ENCODE measurements at regions of chr16 and their contacts with region 1.

Region 1: GRCh38 chr16:85554112-85554813 is 58.9 kb upstream of the GSE1 start:
- DNase-seq: peak; percentile 56
- ATAC-seq: peak; percentile 26
- H3K4me3 ChIP-seq: peak overlapping the region; percentile 75 to 82 (median 81)
- H3K27ac ChIP-seq: peak overlapping the region; percentile 80
- H3K4me1 ChIP-seq: peaks cover 60% of the 10 kb centered on the region
- H3K27me3 ChIP-seq: no peaks in the 10 kb centered on the region
- CTCF ChIP-seq: no peak
- EP300 ChIP-seq: peak in 1 of 2 experiments; percentile 7; a peak in 1 of 4 replicates
- POLR2A ChIP-seq: peak; percentile 36 to 48; a peak in 2 of 4 replicates
- RAD21 ChIP-seq: no peak

Region 2: GRCh38 chr16:85316321-85316919 is 237.8 kb before region 1 on chr16:
- CTCF ChIA-PET with region 1: no interaction called
- POLR2A ChIA-PET with region 1: no interaction called
- in situ Hi-C with region 1: no loop called
- intact Hi-C with region 1: no loop called
- DNase-seq: peak; percentile 80
- ATAC-seq: peak; percentile 85
- H3K4me3 ChIP-seq: no peak overlapping the region
- H3K27ac ChIP-seq: no peak overlapping the region
- H3K4me1 ChIP-seq: peaks cover 34% of the 10 kb centered on the region
- H3K27me3 ChIP-seq: peaks cover 16 to 20% of the 10 kb centered on the region in 2 experiments; a peak in 3 of 5 replicates
- CTCF ChIP-seq: peak; percentile 99
- EP300 ChIP-seq: no peak; a peak in 1 of 4 replicates
- POLR2A ChIP-seq: no peak
- RAD21 ChIP-seq: peak; percentile 92

Region 3: DNA sequence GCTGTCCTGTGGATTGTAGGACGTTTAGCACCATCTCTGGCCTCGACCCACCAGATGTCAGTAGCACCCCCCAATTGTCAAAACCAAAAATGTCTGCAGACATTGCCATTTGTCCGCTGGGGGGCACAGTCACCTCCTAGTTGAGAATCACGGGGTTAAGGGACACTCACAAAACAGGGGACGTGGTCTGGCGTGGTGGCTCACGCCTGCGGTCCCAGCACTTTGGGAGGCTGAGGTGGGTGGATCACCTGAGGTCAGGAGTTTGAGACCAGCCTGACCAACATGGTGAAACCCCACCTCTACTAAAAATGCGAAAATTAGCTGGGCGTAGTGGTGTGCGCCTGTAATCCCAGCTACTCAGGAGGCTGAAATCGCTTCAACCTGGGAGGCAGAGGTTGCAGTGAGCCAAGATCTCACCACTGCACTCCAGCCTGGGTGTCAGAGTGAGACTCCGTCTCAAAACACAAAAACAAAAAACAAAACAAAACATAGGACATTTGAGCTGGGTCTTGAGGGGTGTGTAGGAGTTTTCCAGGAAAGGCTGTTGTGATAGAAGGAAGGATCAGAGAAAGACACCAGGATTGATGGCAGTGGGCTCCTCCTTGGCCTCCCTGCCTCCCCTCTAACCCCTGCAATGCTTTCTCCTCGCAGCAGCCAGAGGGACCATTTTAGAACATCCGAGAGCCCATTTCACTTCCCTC is 112.9 kb before region 1 on chr16:
- CTCF ChIA-PET with region 1: interaction called, 3 read pairs
- POLR2A ChIA-PET with region 1: interaction called, 4 read pairs
- in situ Hi-C with region 1: loop called (anchors 5 kb)
- intact Hi-C with region 1: loop called (anchors 2 kb)
- DNase-seq: peak; percentile 71
- ATAC-seq: peak; percentile 8; the same call in 2 of the 3 replicates
- H3K4me3 ChIP-seq: no peak overlapping the region
- H3K27ac ChIP-seq: no peak overlapping the region
- H3K4me1 ChIP-seq: peaks cover 63% of the 10 kb centered on the region
- H3K27me3 ChIP-seq: peaks cover 8 to 44% of the 10 kb centered on the region in 2 experiments; a peak in 4 of 5 replicates
- CTCF ChIP-seq: peak; percentile 85
- EP300 ChIP-seq: no peak
- POLR2A ChIP-seq: no peak
- RAD21 ChIP-seq: peak; percentile 89

Region 4: GRCh38 chr16:85520853-85521521 is 33.3 kb before region 1 on chr16:
- CTCF ChIA-PET with region 1: interaction called, 3 read pairs
- POLR2A ChIA-PET with region 1: interaction called, 127 read pairs
- in situ Hi-C with region 1: loop called (anchors 5 kb)
- intact Hi-C with region 1: no loop called
- DNase-seq: peak; percentile 71
- ATAC-seq: no peak
- H3K4me3 ChIP-seq: peak overlapping the region in 2 of 3 experiments; percentile 17 to 47; a peak in 3 of 6 replicates
- H3K27ac ChIP-seq: peak overlapping the region; percentile 60
- H3K4me1 ChIP-seq: peaks cover 77% of the 10 kb centered on the region
- H3K27me3 ChIP-seq: no peaks in the 10 kb centered on the region
- CTCF ChIP-seq: 0 out of 2 replicates have a peak, but pooled peaks have one; percentile 9
- EP300 ChIP-seq: peak; percentile 54 to 93; a peak in 3 of 4 replicates
- POLR2A ChIP-seq: no peak
- RAD21 ChIP-seq: peak; percentile 28; the same call in 1 of the 2 replicates

Region 5: DNA sequence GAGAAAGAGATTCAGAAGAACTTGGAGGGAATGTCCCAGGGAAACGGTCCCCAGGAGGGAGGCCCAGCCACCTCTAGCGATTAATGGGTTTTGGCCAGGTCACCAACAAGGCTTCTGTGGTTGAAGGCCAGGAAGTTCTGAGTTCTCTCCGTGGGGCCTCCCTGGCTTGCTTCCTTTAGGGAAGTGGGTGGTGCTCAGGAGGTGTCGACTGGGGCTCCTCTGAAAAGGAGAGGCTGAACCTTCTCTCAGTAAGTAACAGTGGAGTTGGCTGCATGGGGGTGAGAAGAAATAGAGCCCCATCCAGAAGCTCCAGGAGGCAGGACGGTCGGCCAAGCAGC is 18.2 kb before region 1 on chr16:
- CTCF ChIA-PET with region 1: no interaction called
- POLR2A ChIA-PET with region 1: interaction called, 145 read pairs
- in situ Hi-C with region 1: no loop called
- intact Hi-C with region 1: loop called (anchors 2 kb)
- DNase-seq: no peak
- ATAC-seq: no peak
- H3K4me3 ChIP-seq: peak overlapping the region; percentile 35 to 74 (median 51); a peak in 5 of 6 replicates
- H3K27ac ChIP-seq: peak overlapping the region; percentile 90
- H3K4me1 ChIP-seq: peaks cover 100% of the 10 kb centered on the region
- H3K27me3 ChIP-seq: no peaks in the 10 kb centered on the region
- CTCF ChIP-seq: no peak
- EP300 ChIP-seq: no peak
- POLR2A ChIP-seq: no peak
- RAD21 ChIP-seq: no peak

Region 6: DNA sequence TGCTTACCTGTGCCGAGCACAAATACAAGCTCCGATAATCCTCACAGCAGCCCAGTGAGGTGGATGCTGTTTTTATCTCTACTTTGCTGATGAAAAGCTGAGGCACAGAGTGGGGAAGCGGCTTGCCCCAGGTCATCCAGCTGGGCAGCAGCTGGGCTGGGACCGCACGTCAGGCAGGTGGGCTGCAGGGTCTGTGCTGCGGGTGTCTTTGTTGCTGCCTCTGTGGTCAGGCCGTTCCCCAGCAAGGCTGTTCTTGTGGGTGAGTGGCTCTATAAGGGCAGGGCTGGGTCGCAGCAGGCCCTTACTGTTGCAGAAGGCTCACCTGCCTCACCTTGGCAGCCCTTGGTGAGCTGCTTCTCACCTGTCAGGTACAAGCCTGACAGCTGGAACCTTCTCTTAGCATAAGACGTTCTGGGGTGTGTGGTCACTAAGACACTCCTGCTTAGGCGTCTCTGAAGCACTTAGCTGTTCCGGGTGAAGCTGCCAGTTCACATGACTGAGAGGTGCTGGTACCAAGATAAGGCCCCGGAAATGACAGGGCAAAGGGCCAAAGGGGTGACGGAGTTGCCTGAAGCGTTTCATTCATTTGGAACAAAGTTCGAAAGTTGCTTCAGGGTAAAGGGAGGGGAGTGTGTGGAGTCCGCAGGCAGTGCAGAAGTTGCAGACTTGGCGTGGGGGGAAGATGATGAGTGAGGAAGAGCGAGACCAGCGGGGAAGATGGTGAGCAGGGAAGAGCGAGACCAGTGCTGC is 362.1 kb after region 1 on chr16:
- CTCF ChIA-PET with region 1: no interaction called
- POLR2A ChIA-PET with region 1: no interaction called
- in situ Hi-C with region 1: no loop called
- intact Hi-C with region 1: no loop called
- DNase-seq: peak; percentile 62
- ATAC-seq: peak; percentile 70
- H3K4me3 ChIP-seq: peak overlapping the region in 1 of 3 experiments; percentile 28; a peak in 1 of 6 replicates
- H3K27ac ChIP-seq: no peak overlapping the region
- H3K4me1 ChIP-seq: peaks cover 15% of the 10 kb centered on the region
- H3K27me3 ChIP-seq: peaks cover 3 to 25% of the 10 kb centered on the region in 2 experiments; a peak in 4 of 5 replicates
- CTCF ChIP-seq: no peak
- EP300 ChIP-seq: no peak
- POLR2A ChIP-seq: no peak
- RAD21 ChIP-seq: no peak